ENCODE measurements at regions of chr9 and their contacts with region 1.

Region 1: DNA sequence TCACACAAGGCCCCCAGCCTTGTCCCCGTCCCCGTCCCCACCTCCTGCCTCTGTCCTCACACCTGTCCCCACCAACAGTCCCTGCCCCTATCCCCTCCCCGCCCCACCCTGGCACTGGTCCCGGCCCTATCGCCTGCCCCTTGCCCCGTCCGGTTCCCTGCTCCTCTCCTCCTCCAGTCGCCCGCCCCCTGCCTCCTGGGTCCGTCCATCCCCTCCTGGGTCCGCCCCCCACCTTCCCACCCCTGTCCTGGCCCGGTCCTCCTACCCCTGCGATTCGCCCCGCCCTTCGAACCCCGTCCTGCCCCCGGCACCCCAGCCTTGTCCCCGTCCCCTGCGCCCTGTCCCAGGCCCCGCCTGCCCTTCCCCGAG is 389 bp downstream of the EDF1 start:
- DNase-seq: no peak
- ATAC-seq: peak in 7 of 8 donors; percentile 2 to 39 (median 8)
- H3K4me3 ChIP-seq: peak overlapping the region; percentile 70 to 98 (median 82)
- H3K27ac ChIP-seq: peak overlapping the region; percentile 87 to 96 (median 92)
- H3K4me1 ChIP-seq: peaks cover 8 to 31% (median 25%) of the 10 kb centered on the region in 9 donors
- H3K27me3 ChIP-seq: no peaks in the 10 kb centered on the region
- CTCF ChIP-seq: no peak

Region 2: GRCh38 chr9:136823136-136824046 is 42.3 kb before region 1 on chr9:
- intact Hi-C with region 1: no loop called
- DNase-seq: no peak
- ATAC-seq: no peak
- H3K4me3 ChIP-seq: no peak overlapping the region
- H3K27ac ChIP-seq: no peak overlapping the region
- H3K4me1 ChIP-seq: peaks cover 0 to 17% (median 8%) of the 10 kb centered on the region in 9 donors
- H3K27me3 ChIP-seq: no peaks in the 10 kb centered on the region
- CTCF ChIP-seq: no peak

Region 3: GRCh38 chr9:136840140-136840687 is 25.5 kb before region 1 on chr9:
- intact Hi-C with region 1: no loop called
- DNase-seq: no peak
- ATAC-seq: no peak
- H3K4me3 ChIP-seq: no peak overlapping the region
- H3K27ac ChIP-seq: no peak overlapping the region
- H3K4me1 ChIP-seq: peaks cover 17 to 39% (median 30%) of the 10 kb centered on the region in 9 donors
- H3K27me3 ChIP-seq: peaks cover 0 to 21% (median 17%) of the 10 kb centered on the region in 7 donors
- CTCF ChIP-seq: no peak

Region 4: GRCh38 chr9:136928591-136928990 is 62.9 kb after region 1 on chr9:
- intact Hi-C with region 1: loop called in 1 of 10 experiments (anchors 10 kb)
- DNase-seq: peak; percentile 42 to 70
- ATAC-seq: peak; percentile 63 to 93 (median 84)
- H3K4me3 ChIP-seq: peak overlapping the region in 4 of 10 donors; percentile 8 to 14 (median 12)
- H3K27ac ChIP-seq: peak overlapping the region; percentile 43 to 91 (median 84)
- H3K4me1 ChIP-seq: peaks cover 19 to 69% (median 58%) of the 10 kb centered on the region in 9 donors
- H3K27me3 ChIP-seq: no peaks in the 10 kb centered on the region
- CTCF ChIP-seq: peak in 5 of 9 donors; percentile 6 to 43 (median 22)

Measured in heart right ventricle (tissue), 16 donors.